PC-9 (cell line): ENCODE measurements at regions of chr11 and their contacts with region 1.

Region 1: DNA sequence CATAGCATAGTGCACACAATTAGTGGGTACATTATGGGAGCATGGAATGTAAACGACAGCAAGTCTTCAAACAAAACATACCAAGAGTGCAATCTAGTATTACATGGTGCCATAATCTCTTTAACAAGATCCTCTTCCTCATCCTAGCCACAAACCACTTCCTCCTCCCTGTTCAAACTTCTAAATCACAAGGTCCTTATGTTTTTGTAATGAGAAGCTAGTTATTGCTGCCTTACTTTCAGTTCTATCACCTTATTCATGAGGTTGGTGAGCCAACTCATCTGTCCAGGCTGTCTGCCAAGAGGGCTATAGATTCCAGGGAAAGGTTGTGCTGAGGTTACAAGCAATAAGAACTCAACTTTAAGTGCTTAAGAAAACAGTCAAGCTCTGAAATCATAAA is 195.4 kb upstream of the ARHGAP20 start:
- DNase-seq: peak; percentile 4 to 97
- H3K4me3 ChIP-seq: no peak overlapping the region
- H3K27ac ChIP-seq: no peak overlapping the region
- H3K4me1 ChIP-seq: peaks cover 11% of the 10 kb centered on the region; the same call in 1 of the 2 replicates
- H3K27me3 ChIP-seq: no peaks in the 10 kb centered on the region
- CTCF ChIP-seq: no peak

Region 2: GRCh38 chr11:111422494-111423249 is 515.0 kb after region 1 on chr11:
- CTCF ChIA-PET with region 1: no interaction called
- POLR2A ChIA-PET with region 1: no interaction called
- intact Hi-C with region 1: loop called (anchors 10 kb)
- DNase-seq: peak; percentile 57 to 63
- H3K4me3 ChIP-seq: no peak overlapping the region
- H3K27ac ChIP-seq: no peak overlapping the region
- H3K4me1 ChIP-seq: no peaks in the 10 kb centered on the region
- H3K27me3 ChIP-seq: no peaks in the 10 kb centered on the region
- CTCF ChIP-seq: peak; percentile 95